ENCODE measurements at regions of chr9 and their contacts with region 1.

Region 1: DNA sequence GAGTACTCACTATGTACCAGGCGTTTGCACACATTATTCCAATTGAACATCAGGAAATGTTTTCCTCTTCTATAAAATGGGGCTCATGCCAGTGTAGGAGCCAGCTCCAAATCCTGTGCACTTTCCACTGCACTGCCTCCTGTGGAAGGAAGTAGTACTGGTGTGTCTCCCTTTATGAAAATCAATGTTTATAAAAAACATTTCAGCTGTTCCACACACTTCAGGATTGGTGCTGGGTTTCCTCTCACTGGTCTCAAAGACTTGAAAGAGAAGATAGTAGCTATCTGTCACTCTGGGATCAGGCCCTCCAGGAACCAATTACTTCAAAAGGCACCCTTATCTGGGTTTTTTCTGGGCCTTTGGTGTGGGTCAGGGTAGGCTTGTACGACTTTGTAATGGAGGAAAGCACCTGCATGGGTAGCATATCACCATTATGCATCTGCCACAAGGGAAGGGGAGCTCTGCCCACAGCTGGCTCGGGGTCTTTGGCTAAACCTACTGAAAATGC is 32.5 kb downstream of the RAB14 start:
- DNase-seq: no peak
- H3K4me3 ChIP-seq: no peak overlapping the region
- CTCF ChIP-seq: peak; percentile 62

Region 2: DNA sequence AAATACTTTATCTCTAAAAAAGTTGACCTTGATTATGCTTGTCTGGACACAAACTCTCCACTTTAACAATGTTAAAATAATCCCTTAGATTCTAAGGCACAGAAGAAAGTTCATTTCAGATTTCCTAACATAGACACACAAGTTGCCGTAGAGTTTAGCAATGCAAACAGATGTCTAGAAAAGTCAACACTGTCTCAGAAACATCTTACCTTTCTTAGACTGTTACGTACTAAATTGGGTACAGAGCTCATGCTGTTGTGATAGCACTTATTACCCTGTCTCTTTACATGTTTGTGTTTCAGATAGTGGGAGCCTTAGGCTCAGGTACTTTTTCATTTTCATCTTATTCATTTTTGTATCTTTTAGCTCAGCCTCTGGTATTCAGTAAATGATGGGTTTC is 171.0 kb before region 1 on chr9:
- in situ Hi-C with region 1: no loop called
- DNase-seq: no peak
- H3K4me3 ChIP-seq: no peak overlapping the region
- CTCF ChIP-seq: no peak

Region 3: GRCh38 chr9:121125590-121125989 is 43.6 kb before region 1 on chr9:
- in situ Hi-C with region 1: loop called (anchors 5 kb)
- DNase-seq: no peak
- H3K4me3 ChIP-seq: no peak overlapping the region
- CTCF ChIP-seq: no peak

Region 4: DNA sequence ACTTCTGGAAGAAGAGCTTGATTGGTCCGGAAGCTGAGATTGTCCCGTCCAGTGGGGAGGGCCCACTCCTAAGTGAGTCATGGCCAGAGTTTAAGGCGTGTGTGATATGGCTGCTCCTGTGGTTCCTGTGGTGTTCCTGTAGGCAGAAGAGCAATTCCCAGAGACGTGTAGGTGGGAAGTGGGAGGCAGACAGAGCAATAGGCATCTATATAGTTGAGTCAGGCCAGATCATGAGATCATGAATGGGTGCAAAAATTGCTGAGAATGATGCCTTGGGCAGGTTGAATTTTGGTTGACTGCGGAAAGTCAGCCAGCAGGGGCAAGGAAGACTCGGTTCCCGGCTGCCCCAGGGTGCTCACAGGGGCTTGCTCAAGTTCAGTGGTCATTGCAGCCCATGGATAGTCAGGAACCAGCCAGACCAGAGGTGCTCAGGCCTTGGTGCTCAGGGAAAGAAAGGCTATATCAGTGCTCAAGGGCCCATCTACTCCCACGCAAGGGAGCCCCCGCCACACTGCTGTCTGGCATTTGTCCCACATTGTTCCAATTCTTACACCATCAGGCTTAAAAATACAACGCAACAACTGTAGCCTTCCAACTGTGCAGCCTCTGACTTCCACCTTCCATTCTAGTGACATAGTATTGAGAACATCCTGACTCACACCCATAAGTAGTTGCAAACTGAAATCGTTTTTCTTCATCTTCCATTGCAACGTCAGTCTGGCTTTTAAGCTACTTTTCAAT is 77.8 kb after region 1 on chr9:
- in situ Hi-C with region 1: loop called (anchors 5 kb)
- DNase-seq: peak; percentile 55
- H3K4me3 ChIP-seq: no peak overlapping the region
- CTCF ChIP-seq: no peak

Measured in astrocyte of the cerebellum (primary cell).